ENCODE measurements at regions of chr1 and their contacts with region 1.

Region 1: DNA sequence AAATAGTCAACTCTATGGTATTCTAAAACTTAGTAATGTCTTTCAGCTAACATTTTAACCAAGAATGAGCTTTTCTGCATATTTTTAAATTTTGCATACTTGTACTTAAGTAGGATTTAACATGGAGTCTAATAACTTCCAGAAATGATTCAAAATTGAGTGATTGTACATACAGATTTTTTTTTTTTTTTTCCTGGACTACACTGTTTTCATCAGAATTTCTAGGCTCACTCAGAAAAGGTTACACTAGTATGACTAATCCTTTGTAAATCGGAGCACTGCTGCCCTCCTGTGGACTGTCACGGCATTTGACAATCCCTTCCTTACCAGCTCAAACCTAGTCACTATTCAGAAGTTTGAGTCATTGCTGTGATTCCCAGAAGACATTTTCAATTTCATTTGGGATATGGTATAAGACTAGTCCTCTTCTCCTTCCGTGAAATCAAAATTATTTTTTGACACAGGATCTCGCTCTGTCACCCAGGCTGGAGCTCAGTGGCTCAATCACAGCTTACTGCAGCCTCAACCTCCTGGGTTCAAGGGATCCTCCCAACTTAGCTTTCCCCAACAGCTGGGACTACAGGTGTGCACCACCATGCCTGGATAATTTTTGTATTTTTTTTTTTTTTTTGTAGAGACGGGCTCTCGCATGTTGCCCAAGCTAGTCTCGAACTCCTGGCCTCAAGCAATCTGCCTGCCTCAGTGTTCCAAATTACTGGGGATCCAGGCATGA is 45.5 kb downstream of the CD46 start:
- DNase-seq: peak; percentile 54
- ATAC-seq: peak; percentile 92
- H3K4me3 Mint-ChIP-seq: no peak overlapping the region
- H3K27ac Mint-ChIP-seq: peak overlapping the region; percentile 27
- H3K4me1 Mint-ChIP-seq: peaks cover 30% of the 10 kb centered on the region
- H3K27me3 Mint-ChIP-seq: no peaks in the 10 kb centered on the region
- CTCF ChIP-seq: peak; percentile 90

Region 2: DNA sequence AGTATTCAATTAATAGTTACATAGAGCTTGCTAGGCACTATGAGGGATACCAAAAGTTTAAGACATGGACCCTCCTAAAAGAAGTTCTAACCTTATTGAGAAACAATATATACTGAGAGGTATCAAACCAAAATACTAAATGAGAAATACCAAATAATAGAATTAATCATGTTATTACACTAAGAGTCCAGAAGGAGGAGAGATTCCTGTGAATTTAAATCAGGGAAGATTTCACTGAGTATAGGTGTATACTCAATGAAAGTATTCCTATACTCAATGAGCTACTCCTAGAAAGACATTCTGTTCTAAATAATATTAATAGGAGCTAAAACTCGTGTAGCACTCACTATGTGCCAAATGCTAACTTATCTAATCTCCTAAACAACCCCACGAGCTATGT is 143.1 kb before region 1 on chr1:
- CTCF ChIA-PET with region 1: interaction called, 6 read pairs
- POLR2A ChIA-PET with region 1: no interaction called
- intact Hi-C with region 1: loop called (anchors 2 kb)
- DNase-seq: no peak
- ATAC-seq: no peak
- H3K4me3 Mint-ChIP-seq: no peak overlapping the region
- H3K27ac Mint-ChIP-seq: no peak overlapping the region
- H3K4me1 Mint-ChIP-seq: peaks cover 2% of the 10 kb centered on the region
- H3K27me3 Mint-ChIP-seq: no peaks in the 10 kb centered on the region
- CTCF ChIP-seq: no peak

Region 3: DNA sequence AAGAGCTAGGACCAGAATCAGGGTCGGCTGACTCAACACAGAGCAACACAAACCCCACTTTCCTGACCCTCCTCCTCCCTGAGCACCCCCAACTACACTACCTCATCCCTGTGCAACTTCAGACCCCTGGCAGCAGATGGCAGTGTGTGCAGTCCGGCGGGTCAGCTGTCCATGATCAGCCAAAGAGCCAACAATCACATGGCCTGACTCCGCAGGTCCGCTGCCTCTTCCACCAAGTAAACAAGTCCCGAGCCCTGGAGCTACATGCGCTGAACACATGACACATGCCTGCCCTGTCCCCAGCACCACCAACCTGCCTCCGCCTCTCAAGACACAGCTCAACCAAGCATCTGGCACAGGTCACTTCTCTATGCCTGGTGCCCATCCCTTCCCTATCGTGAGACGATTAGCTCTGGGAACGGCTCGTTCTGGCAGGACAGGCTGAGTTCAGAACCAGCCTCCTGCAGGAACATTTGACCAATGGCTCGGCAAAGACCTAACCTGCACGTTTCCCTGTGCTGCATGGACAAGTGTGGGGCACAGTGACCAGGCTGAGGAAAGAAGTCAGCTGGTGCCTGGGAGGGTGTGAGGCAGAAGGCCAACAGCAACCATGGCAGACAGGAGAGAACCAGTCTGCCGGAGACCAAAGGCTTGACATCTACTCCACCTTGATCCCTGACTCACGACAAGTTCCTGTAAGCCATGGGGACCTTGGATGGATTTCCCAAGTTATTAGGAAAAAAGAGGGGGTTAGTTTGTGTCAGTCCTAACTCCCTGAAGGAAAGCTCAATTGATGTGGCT is 14.7 kb after region 1 on chr1:
- CTCF ChIA-PET with region 1: interaction called, 14 read pairs
- POLR2A ChIA-PET with region 1: interaction called, 6 read pairs
- intact Hi-C with region 1: no loop called
- DNase-seq: no peak
- ATAC-seq: no peak
- H3K4me3 Mint-ChIP-seq: no peak overlapping the region
- H3K27ac Mint-ChIP-seq: no peak overlapping the region
- H3K4me1 Mint-ChIP-seq: peaks cover 90% of the 10 kb centered on the region
- H3K27me3 Mint-ChIP-seq: no peaks in the 10 kb centered on the region
- CTCF ChIP-seq: no peak

Region 4: GRCh38 chr1:207868774-207869721 is 71.7 kb after region 1 on chr1:
- CTCF ChIA-PET with region 1: interaction called, 50 read pairs
- POLR2A ChIA-PET with region 1: interaction called, 9 read pairs
- intact Hi-C with region 1: loop called (anchors 1 kb)
- DNase-seq: peak; percentile 74
- ATAC-seq: peak; percentile 83
- H3K4me3 Mint-ChIP-seq: peak overlapping the region; percentile 91
- H3K27ac Mint-ChIP-seq: peak overlapping the region; percentile 86
- H3K4me1 Mint-ChIP-seq: peaks cover 86% of the 10 kb centered on the region
- H3K27me3 Mint-ChIP-seq: no peaks in the 10 kb centered on the region
- CTCF ChIP-seq: peak; percentile 34

Region 5: GRCh38 chr1:207963427-207964194 is 166.2 kb after region 1 on chr1:
- CTCF ChIA-PET with region 1: interaction called, 20 read pairs
- POLR2A ChIA-PET with region 1: interaction called, 5 read pairs
- intact Hi-C with region 1: loop called (anchors 1 kb)
- DNase-seq: peak; percentile 89
- ATAC-seq: peak; percentile 95
- H3K4me3 Mint-ChIP-seq: peak overlapping the region; percentile 87
- H3K27ac Mint-ChIP-seq: no peak overlapping the region
- H3K4me1 Mint-ChIP-seq: peaks cover 17% of the 10 kb centered on the region
- H3K27me3 Mint-ChIP-seq: peaks cover 28% of the 10 kb centered on the region
- CTCF ChIP-seq: peak; percentile 54

Measured in activated B cell treated with CpG ODN at 0.5 μM for 24 hours (primary cell).